ENCODE measurements at regions of chr1 and their contacts with region 1.

Region 1: DNA sequence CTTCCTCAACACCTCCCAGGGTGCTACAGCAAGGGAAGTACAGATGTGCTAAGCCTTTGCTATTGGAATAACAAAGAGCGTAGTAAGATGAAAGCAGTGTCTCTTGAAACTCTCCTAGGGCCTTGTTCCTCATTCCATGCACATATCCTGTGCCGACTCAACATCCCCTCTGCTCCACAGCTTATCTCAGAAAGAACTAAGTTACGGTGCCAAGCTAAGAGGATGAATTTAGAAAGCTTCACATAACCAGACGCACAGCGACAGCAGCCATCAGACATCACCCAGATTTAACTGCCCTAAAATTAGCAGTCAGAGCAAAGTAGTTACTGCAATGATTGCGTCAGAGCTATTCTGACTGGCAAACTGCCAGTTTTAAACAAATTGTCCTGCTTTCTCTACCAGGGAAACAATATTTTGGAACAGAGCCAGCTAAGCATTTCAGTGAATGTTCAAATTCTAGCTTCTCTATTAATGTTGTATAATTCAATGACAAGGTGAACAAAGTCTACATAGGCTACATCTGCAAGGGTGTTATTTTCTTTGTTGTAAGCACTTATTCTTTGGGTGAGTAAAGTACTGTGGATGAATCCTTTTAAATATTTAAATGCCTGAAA is 9.5 kb downstream of the SIPA1L2 start:
- DNase-seq: no peak
- ATAC-seq: peak; percentile 94

Region 2: DNA sequence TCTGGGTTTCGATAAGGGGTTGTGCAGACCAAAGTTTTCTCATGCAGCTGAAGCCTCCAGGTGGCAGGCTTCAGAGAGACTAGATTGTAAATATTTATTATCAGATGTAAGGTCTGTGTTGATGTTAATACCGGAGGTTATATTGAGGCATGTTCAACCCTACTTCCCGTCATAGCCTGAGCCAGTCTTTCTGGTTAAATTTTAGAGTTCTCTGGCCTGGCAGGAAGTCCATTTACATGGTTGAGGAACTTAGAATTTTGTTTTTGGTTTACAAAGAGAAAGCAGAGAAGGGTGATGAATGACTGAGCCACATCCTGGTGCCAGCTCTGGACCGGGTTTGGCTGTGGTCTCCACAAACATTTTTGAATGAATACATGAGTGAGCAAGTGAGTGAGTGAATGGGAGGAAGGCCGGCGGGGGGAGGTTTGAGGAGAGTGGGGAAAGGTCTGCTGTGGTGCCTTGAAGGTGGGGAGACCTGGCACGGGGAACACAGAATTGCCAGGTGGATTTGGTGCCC is 775.4 kb before region 1 on chr1:
- intact Hi-C with region 1: loop called (anchors 1 kb)
- DNase-seq: no peak
- ATAC-seq: no peak

Region 3: DNA sequence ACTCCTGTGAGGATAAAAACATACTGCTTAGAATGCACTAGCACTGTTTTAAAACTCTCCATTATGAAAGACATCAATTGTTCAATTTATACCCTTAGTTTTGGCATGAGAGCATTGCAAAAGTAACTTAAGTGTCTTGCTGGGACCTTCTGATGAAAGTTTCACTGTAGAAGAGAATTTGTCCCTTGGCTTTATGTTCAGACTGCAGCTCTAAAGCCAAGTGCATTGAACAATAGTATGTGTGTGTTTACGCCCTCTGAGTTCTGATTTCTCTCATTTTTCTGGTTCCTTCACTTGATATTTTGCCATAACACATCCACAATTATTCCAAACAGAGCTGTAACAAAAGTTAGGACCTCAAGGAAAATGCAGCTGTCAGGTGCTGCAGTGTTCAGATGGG is 519.2 kb before region 1 on chr1:
- intact Hi-C with region 1: no loop called
- DNase-seq: no peak
- ATAC-seq: no peak

Region 4: GRCh38 chr1:232553050-232553754 is 67.3 kb before region 1 on chr1:
- intact Hi-C with region 1: loop called (anchors 2 kb)
- DNase-seq: peak; percentile 83
- ATAC-seq: peak; percentile 82

Region 5: GRCh38 chr1:232593717-232594502 is 26.6 kb before region 1 on chr1:
- intact Hi-C with region 1: loop called (anchors 2 kb)
- DNase-seq: no peak
- ATAC-seq: no peak